ENCODE measurements at regions of chr9 and their contacts with region 1.

Region 1: DNA sequence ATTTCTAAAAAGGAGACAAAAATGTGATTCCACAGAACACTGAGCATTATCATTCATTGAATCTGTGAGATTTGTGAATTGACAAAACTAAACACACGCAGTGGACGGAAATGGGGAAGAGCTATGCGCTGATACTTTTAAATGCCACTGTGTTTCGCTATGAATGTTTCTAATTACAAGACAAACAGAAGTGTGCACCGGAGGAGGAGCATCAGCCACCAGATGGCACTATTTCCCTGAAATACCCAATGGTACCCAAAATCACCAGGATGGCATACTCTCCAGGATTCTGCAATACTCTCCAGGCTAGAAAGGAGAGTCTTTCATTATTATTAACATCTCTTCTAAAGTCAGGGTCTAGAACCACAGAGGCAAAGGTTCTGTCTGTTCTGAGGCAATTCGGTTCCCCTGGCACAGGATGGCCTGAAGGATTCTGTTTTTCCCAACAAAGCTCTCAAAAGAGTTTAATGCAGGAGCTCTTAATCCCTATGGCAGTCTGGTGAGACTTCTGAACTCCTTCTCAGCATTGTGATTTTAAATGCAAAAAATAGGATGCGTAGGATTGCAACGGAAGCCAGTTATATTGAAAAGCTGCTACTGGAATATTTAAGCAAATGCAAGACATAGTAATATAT is 13.8 kb upstream of the PUM3 start:
- DNase-seq: peak; percentile 28 to 61 (median 35)
- H3K4me3 ChIP-seq: no peak overlapping the region
- H3K4me3 Mint-ChIP-seq: no peak overlapping the region
- H3K27ac ChIP-seq: no peak overlapping the region
- H3K27ac Mint-ChIP-seq: no peak overlapping the region
- H3K4me1 ChIP-seq: no peaks in the 10 kb centered on the region
- H3K4me1 Mint-ChIP-seq: peaks cover 3 to 8% (median 6%) of the 10 kb centered on the region in 3 donors
- H3K27me3 ChIP-seq: peaks cover 5% of the 10 kb centered on the region
- H3K27me3 Mint-ChIP-seq: peaks cover 22 to 48% of the 10 kb centered on the region in 2 donors

Region 2: DNA sequence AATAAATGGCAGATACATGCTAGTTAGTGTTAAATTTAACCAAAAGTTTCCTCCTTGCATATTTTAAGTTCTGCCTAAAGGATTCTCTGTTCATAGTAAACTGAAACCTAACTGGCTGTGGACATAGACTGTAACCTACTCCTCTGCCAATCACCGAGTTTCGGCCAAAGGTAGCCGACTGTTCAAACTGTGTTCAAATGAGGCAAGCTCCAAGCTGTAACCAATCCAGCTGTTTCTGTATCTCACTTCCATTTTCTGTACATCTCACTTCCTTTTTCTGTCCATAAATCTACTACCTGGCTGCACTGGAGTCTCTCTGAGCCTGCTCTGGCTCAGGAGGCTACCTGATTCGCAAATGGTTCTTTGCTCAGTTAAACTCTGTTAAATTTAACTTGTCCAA is 96.3 kb before region 1 on chr9:
- CTCF ChIA-PET with region 1: no interaction called
- POLR2A ChIA-PET with region 1: no interaction called
- DNase-seq: no peak
- H3K4me3 ChIP-seq: no peak overlapping the region
- H3K4me3 Mint-ChIP-seq: no peak overlapping the region
- H3K27ac ChIP-seq: no peak overlapping the region
- H3K27ac Mint-ChIP-seq: no peak overlapping the region
- H3K4me1 ChIP-seq: peaks cover 14% of the 10 kb centered on the region
- H3K4me1 Mint-ChIP-seq: peaks cover 20 to 29% (median 28%) of the 10 kb centered on the region in 3 donors
- H3K27me3 ChIP-seq: no peaks in the 10 kb centered on the region
- H3K27me3 Mint-ChIP-seq: peaks cover 0 to 1% of the 10 kb centered on the region in 2 donors

Region 3: GRCh38 chr9:2868883-2869282 is 11.2 kb after region 1 on chr9:
- CTCF ChIA-PET with region 1: interaction called, 10 read pairs
- POLR2A ChIA-PET with region 1: no interaction called
- DNase-seq: no peak
- H3K4me3 ChIP-seq: no peak overlapping the region
- H3K4me3 Mint-ChIP-seq: no peak overlapping the region
- H3K27ac ChIP-seq: no peak overlapping the region
- H3K27ac Mint-ChIP-seq: no peak overlapping the region
- H3K4me1 ChIP-seq: no peaks in the 10 kb centered on the region
- H3K4me1 Mint-ChIP-seq: peaks cover 0 to 3% (median 0%) of the 10 kb centered on the region in 3 donors
- H3K27me3 ChIP-seq: no peaks in the 10 kb centered on the region
- H3K27me3 Mint-ChIP-seq: peaks cover 19 to 45% of the 10 kb centered on the region in 2 donors

Region 4: GRCh38 chr9:2879803-2880202 is 22.1 kb after region 1 on chr9:
- CTCF ChIA-PET with region 1: no interaction called
- POLR2A ChIA-PET with region 1: no interaction called
- DNase-seq: no peak
- H3K4me3 ChIP-seq: no peak overlapping the region
- H3K4me3 Mint-ChIP-seq: no peak overlapping the region
- H3K27ac ChIP-seq: no peak overlapping the region
- H3K27ac Mint-ChIP-seq: no peak overlapping the region
- H3K4me1 ChIP-seq: no peaks in the 10 kb centered on the region
- H3K4me1 Mint-ChIP-seq: no peaks in the 10 kb centered on the region
- H3K27me3 ChIP-seq: no peaks in the 10 kb centered on the region
- H3K27me3 Mint-ChIP-seq: peaks cover 10 to 49% of the 10 kb centered on the region in 2 donors

Region 5: DNA sequence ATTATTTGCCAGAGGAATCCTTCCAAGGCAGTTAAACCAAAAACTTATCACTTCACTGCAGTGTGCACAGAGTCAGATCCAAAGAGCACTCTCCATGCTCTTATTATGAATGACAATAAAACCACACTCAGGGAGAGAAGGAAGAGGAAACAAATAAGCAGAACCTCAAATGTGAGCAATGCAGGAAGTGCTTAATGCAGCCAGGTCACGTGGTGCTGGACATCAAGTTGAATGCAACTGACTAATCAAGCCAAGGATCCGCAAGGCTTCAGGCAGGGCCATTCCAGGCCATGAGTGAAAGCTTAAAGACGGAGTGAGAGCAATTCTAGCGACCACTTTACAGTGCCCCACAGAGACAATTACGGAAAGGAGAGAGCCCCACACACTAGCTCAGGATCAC is 216.6 kb after region 1 on chr9:
- CTCF ChIA-PET with region 1: no interaction called
- POLR2A ChIA-PET with region 1: no interaction called
- DNase-seq: no peak
- H3K4me3 ChIP-seq: no peak overlapping the region
- H3K4me3 Mint-ChIP-seq: no peak overlapping the region
- H3K27ac ChIP-seq: no peak overlapping the region
- H3K27ac Mint-ChIP-seq: no peak overlapping the region
- H3K4me1 ChIP-seq: no peaks in the 10 kb centered on the region
- H3K4me1 Mint-ChIP-seq: no peaks in the 10 kb centered on the region
- H3K27me3 ChIP-seq: no peaks in the 10 kb centered on the region
- H3K27me3 Mint-ChIP-seq: no peaks in the 10 kb centered on the region